Heart left ventricle (tissue), 16 donors: ENCODE measurements at regions of chr17 and their contacts with region 1.

Region 1: GRCh38 chr17:71409712-71410111 is 711.1 kb upstream of the SOX9 start:
- DNase-seq: no peak
- ATAC-seq: no peak
- H3K4me3 ChIP-seq: no peak overlapping the region
- H3K27ac ChIP-seq: no peak overlapping the region
- H3K4me1 ChIP-seq: no peaks in the 10 kb centered on the region
- H3K27me3 ChIP-seq: no peaks in the 10 kb centered on the region
- CTCF ChIP-seq: no peak
- POLR2A ChIP-seq: no peak

Region 2: DNA sequence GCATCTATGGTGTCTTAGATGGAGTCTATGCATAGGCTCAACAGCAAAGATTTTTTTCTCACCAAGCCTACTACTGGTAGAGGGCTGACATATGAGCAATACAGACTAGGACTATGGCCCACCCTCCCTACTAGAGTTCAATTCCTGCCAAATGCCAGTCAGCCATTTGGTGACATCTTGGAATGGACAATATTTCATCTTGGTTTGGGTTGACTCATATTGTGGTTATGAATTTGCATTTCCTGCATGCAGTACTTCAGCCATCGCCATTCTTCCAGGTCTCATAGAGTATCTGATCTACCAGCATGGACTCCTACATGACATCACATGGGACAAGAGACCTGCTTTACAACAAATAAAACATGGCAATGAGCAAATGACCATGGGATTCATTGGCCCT is 67.0 kb before region 1 on chr17:
- intact Hi-C with region 1: loop called in 1 of 10 experiments (anchors 10 kb)
- DNase-seq: no peak
- ATAC-seq: no peak
- H3K4me3 ChIP-seq: no peak overlapping the region
- H3K27ac ChIP-seq: no peak overlapping the region
- H3K4me1 ChIP-seq: peaks cover 0 to 3% (median 0%) of the 10 kb centered on the region in 12 donors
- H3K27me3 ChIP-seq: no peaks in the 10 kb centered on the region
- CTCF ChIP-seq: no peak
- POLR2A ChIP-seq: no peak

Region 3: DNA sequence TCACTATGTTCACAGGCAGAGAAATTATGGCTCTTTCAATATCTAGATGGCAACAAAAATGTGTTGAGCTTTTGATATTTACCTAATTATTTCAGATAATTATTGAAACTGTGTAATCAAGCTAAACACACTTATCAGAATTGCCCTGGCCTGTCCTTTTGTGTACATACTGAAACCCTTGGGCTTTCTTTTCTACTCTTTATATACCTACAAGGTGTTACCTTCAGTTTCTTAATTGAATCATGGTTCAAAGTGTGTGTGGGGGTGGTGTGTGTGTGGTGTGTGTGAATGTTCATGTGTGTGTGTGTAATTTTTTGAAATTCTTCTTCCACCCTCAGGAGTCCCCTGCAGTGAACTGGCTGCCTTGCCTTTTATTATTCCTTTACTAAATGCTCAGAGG is 204.3 kb after region 1 on chr17:
- intact Hi-C with region 1: no loop called
- DNase-seq: no peak
- ATAC-seq: no peak
- H3K4me3 ChIP-seq: no peak overlapping the region
- H3K27ac ChIP-seq: no peak overlapping the region
- H3K4me1 ChIP-seq: no peaks in the 10 kb centered on the region
- H3K27me3 ChIP-seq: no peaks in the 10 kb centered on the region
- CTCF ChIP-seq: no peak
- POLR2A ChIP-seq: no peak